Vagina (tissue), 2 donors: ENCODE measurements at regions of chr2 and their contacts with region 1.

Region 1: GRCh38 chr2:9310377-9310776 is 103.8 kb downstream of the ASAP2 start:
- DNase-seq: no peak
- H3K4me3 ChIP-seq: no peak overlapping the region
- H3K27ac ChIP-seq: peak overlapping the region; percentile 89
- H3K4me1 ChIP-seq: peaks cover 57% of the 10 kb centered on the region
- H3K27me3 ChIP-seq: no peaks in the 10 kb centered on the region
- CTCF ChIP-seq: no peak
- POLR2A ChIP-seq: no peak

Region 2: DNA sequence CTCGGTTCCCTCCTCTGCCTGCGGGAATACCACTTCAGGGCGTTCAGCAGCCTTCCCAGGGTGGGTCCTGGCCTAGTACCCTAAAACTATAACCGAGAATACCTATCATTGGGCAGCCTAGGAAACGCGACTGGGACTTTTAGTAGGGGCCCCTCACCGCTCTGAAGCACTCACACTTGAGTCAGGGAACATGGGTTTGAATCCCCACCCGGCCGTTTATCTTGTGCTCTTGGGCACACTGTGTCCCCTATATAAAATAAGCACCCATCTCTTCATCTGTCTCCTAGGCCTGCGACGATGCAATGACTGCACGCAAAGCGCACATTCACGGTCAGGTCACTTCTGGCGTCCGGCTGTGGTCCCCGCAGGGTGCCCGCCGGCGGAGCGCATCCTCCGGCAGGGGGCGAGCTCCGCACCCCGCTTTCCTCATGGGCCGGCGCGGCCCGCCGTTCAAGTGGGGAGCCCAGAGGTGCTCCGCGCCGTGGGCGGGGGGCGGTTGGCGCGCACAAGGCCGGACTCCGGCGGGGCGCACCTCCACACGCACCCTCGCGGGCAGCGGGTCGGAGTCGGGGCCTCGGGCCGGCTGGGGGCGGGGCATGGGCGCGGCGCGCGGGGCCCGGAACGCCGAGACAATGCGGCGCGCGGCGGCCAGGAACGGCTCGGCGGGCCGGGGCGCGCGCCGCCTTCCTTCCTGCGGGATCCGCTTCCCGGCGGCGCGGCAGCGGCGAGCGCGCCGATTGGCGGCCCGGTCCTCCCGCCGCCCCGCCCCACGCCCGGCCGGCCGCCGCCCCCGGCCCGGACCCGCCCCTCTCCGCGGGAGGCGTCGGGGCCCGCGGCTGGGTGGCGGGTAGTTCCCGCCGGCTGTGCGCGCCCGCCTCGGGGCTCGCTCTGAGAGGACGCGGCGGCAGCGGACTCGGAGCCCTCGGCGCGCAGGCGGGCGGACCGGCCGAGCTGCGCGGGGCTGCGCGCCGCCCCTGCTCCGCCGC is 104.1 kb before region 1 on chr2 and contains the start of gene ASAP2:
- intact Hi-C with region 1: loop called (anchors 10 kb)
- DNase-seq: peak in 1 of 2 donors; percentile 88
- H3K4me3 ChIP-seq: peak within 1 kb of the TSS; percentile 54 to 88
- H3K27ac ChIP-seq: peak within 1 kb of the TSS; percentile 68
- H3K4me1 ChIP-seq: peaks cover 37% of the 10 kb centered on the region
- H3K27me3 ChIP-seq: no peaks in the 10 kb centered on the region
- CTCF ChIP-seq: peak; percentile 47 to 88 (median 68)
- POLR2A ChIP-seq: peak in 1 of 2 donors; percentile 9
- total RNA-seq, gene ASAP2: 36.3 TPM

Region 3: DNA sequence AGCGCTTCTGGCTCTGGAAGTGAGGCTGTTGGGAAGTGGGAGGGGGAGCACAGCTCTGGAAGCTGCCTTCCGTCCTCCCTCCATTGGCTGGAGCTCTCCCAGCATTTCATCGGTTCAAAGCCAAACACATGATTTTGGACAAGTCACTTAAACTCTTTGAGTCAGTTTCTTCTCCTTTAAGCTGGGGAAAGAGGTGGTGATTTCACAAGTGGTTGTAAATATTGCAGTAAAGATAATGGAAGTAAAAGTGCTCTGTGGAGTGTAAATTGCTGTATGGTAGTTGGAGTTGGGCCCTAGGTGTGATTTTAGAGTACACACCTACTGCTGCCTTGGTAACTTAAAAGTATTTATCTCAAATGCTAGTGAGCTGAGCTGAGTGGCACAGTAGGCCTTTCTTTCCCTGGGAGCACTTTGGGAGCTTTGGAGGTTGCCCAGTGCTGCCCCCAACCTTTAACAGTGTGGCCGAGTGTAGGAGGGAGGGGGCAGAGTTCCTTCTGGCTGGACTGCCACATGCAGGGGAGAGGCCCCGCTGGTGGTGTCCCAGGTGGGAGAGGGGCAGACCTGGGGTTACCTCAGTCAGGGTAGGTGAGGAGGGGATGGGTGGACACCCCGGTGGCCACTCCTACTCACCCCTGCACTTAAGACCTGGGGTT is 49.0 kb before region 1 on chr2:
- intact Hi-C with region 1: loop called (anchors 10 kb)
- DNase-seq: no peak
- H3K4me3 ChIP-seq: peak overlapping the region in 1 of 2 donors; percentile 9
- H3K27ac ChIP-seq: peak overlapping the region; percentile 90
- H3K4me1 ChIP-seq: peaks cover 80% of the 10 kb centered on the region
- H3K27me3 ChIP-seq: no peaks in the 10 kb centered on the region
- CTCF ChIP-seq: no peak
- POLR2A ChIP-seq: no peak